Mammary epithelial cell (primary cell): ENCODE measurements at regions of chr7 and their contacts with region 1.

Region 1: GRCh38 chr7:16982640-16983350 is 101.0 kb upstream of the AGR3 start:
- DNase-seq: peak; percentile 30
- H3K4me3 ChIP-seq: no peak overlapping the region
- H3K27ac ChIP-seq: no peak overlapping the region
- H3K4me1 ChIP-seq: peaks cover 19% of the 10 kb centered on the region
- H3K27me3 ChIP-seq: no peaks in the 10 kb centered on the region
- CTCF ChIP-seq: peak; percentile 95 to 96

Region 2: DNA sequence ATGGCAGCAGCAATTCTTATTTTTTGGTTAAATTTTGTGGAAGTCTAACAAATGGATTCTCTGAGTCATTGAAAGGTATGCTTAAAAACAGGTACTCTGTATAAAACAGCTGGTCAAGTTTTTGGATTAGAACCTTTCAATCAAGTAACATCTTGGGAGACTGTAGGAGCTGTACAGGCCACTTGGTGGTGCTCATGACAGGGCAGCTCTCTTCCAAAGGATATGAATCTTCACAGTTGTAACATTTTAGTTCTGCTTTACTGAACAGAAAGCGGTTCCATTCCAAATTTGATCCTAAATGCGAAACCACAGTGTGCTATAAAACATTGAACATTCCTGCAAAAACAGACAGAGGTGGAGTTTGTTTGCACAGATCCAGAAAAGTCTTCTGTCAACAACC is 56.5 kb before region 1 on chr7:
- CTCF ChIA-PET with region 1: no interaction called
- dilution Hi-C with region 1: no loop called
- in situ Hi-C with region 1: no loop called
- intact Hi-C with region 1: loop called (anchors 2 kb)
- DNase-seq: peak; percentile 23
- H3K4me3 ChIP-seq: no peak overlapping the region
- H3K27ac ChIP-seq: no peak overlapping the region
- H3K4me1 ChIP-seq: peaks cover 10% of the 10 kb centered on the region
- H3K27me3 ChIP-seq: no peaks in the 10 kb centered on the region
- CTCF ChIP-seq: peak; percentile 86 to 90

Region 3: DNA sequence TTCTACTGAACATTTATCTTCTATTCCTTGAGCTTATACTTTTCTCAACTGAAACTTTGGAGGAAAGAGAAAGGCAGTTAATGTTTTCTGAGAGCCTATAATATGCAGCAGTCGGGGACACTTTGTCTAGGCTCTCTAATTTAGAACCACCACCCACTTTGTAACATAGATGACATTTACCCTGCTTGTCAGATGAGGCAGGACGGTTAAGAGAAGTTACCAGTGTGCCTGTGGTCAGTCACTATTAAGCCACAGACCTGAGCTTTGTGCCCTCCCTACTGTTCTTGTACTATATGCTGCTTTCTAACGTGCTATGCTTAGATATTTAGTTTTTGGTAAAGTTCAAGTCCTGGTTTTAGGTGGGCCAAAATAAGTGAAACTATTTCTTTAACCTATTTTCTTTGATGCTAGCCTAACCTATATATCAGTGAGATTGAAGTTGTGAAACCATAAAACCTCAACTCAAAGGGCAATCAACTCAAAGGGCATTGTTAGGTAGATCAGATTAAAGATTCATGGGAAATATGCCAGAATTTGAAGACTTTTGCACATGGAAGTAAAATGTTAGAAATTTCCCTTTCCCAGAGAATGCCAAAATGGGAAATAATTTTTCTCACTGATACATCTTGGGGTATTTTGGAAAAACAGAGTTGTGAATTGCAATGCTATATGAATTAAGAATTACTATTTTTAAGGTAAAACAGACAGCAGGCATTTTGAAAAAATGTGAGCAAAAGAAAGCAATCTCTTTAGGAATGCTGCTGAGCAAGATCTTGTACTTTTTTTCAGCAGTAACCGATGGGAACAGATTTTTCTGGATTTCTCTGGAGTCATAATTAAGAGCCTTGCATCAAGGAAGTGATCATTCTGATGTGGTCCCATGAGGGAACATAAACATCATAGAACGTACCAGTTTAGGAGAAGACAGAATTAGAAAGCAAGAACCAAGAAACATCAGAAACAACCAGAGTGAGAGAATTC is 55.7 kb after region 1 on chr7:
- CTCF ChIA-PET with region 1: interaction called, 16 read pairs
- dilution Hi-C with region 1: no loop called
- in situ Hi-C with region 1: no loop called
- intact Hi-C with region 1: no loop called
- DNase-seq: no peak
- H3K4me3 ChIP-seq: no peak overlapping the region
- H3K27ac ChIP-seq: no peak overlapping the region
- H3K4me1 ChIP-seq: peaks cover 25% of the 10 kb centered on the region
- H3K27me3 ChIP-seq: no peaks in the 10 kb centered on the region
- CTCF ChIP-seq: no peak

Region 4: DNA sequence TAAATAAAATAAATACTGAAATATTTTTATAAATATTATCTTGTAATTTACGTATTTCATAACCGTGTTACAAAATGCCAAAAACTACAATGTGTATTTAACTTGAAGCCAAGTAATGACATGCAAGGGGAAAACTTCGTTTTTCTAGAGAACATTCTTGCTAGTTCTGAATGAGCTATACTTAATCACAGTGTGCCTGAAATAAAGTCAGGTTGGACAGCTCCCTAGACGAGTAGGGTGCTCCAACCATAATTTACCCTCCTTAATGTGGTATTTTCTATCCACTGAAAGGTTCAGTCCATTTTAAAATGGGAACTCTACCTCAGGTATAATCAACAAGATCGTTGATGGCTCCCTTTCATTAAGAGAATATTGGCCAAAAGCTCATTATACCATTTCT is 121.2 kb after region 1 on chr7:
- CTCF ChIA-PET with region 1: interaction called, 28 read pairs
- dilution Hi-C with region 1: no loop called
- in situ Hi-C with region 1: no loop called
- intact Hi-C with region 1: loop called (anchors 10 kb)
- DNase-seq: no peak
- H3K4me3 ChIP-seq: no peak overlapping the region
- H3K27ac ChIP-seq: no peak overlapping the region
- H3K4me1 ChIP-seq: peaks cover 9% of the 10 kb centered on the region
- H3K27me3 ChIP-seq: no peaks in the 10 kb centered on the region
- CTCF ChIP-seq: no peak

Region 5: DNA sequence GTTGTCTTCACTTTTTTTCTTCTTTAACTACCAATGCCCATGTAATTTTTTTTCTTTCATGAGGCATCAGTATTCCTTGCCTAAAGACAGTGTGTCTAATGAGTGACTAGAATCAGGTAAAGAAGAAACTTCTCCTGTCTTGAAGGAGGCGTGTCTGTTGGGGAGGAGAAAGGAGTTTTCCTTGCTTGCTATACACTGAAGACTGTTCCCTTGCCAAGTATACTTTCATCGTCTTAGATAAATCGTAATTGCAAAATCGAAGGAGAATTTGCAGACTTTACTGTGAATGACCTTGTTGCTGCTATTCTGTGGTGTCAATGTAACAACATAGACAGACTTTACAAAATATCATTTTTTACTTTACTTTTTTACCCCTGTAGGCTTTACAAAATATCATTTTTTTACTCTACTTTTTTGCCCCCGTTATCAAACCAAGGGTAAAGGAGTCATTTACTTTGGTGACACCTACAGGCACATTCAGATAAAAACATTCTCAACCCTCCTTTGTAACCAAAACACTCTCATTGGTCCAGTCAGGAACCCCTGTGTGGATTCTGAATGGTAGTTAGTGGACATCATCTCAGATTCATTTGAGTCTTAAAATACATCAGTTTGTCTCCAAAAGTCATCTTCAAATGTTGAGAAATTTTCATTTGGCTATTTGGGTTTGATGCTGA is 548.1 kb after region 1 on chr7:
- CTCF ChIA-PET with region 1: no interaction called
- dilution Hi-C with region 1: no loop called
- in situ Hi-C with region 1: no loop called
- intact Hi-C with region 1: loop called (anchors 5 kb)
- DNase-seq: peak; percentile 28
- H3K4me3 ChIP-seq: no peak overlapping the region
- H3K27ac ChIP-seq: no peak overlapping the region
- H3K4me1 ChIP-seq: peaks cover 27% of the 10 kb centered on the region
- H3K27me3 ChIP-seq: no peaks in the 10 kb centered on the region
- CTCF ChIP-seq: peak in 1 of 2 donors; percentile 31

Region 6: GRCh38 chr7:17663061-17663675 is 680.4 kb after region 1 on chr7:
- CTCF ChIA-PET with region 1: interaction called, 15 read pairs
- dilution Hi-C with region 1: no loop called
- in situ Hi-C with region 1: loop called (anchors 10 to 25 kb)
- intact Hi-C with region 1: no loop called
- DNase-seq: peak; percentile 69
- H3K4me3 ChIP-seq: no peak overlapping the region
- H3K27ac ChIP-seq: peak overlapping the region; percentile 90
- H3K4me1 ChIP-seq: peaks cover 34% of the 10 kb centered on the region
- H3K27me3 ChIP-seq: no peaks in the 10 kb centered on the region
- CTCF ChIP-seq: no peak